ENCODE measurements at regions of chr7 and their contacts with region 1.

Region 1: GRCh38 chr7:90312745-90313144 is 8.4 kb downstream of the FAM237B start:
- DNase-seq: no peak
- H3K4me3 ChIP-seq: no peak overlapping the region
- H3K4me3 Mint-ChIP-seq: no peak overlapping the region
- H3K27ac Mint-ChIP-seq: no peak overlapping the region
- H3K4me1 ChIP-seq: no peaks in the 10 kb centered on the region
- H3K4me1 Mint-ChIP-seq: no peaks in the 10 kb centered on the region
- H3K27me3 ChIP-seq: no peaks in the 10 kb centered on the region
- H3K27me3 Mint-ChIP-seq: no peaks in the 10 kb centered on the region
- CTCF ChIP-seq: no peak

Region 2: GRCh38 chr7:90346336-90347125 is 33.8 kb after region 1 on chr7 and contains the start of gene GTPBP10:
- CTCF ChIA-PET with region 1: no interaction called
- POLR2A ChIA-PET with region 1: no interaction called
- intact Hi-C with region 1: no loop called
- DNase-seq: peak; percentile 93 to 94
- H3K4me3 ChIP-seq: peak within 1 kb of the TSS; percentile 86
- H3K4me3 Mint-ChIP-seq: peak within 1 kb of the TSS; percentile 86
- H3K27ac Mint-ChIP-seq: peak within 1 kb of the TSS; percentile 94
- H3K4me1 ChIP-seq: peaks cover 15% of the 10 kb centered on the region
- H3K4me1 Mint-ChIP-seq: peaks cover 32% of the 10 kb centered on the region
- H3K27me3 ChIP-seq: no peaks in the 10 kb centered on the region
- H3K27me3 Mint-ChIP-seq: no peaks in the 10 kb centered on the region
- CTCF ChIP-seq: peak; percentile 67 to 82
- total RNA-seq, gene GTPBP10: 42.7 and 45.2 TPM in 2 replicates

Region 3: GRCh38 chr7:90412458-90413184 is 99.9 kb after region 1 on chr7:
- CTCF ChIA-PET with region 1: no interaction called
- POLR2A ChIA-PET with region 1: no interaction called
- intact Hi-C with region 1: loop called (anchors 1 kb)
- DNase-seq: peak; percentile 60 to 64
- H3K4me3 ChIP-seq: no peak overlapping the region
- H3K4me3 Mint-ChIP-seq: no peak overlapping the region
- H3K27ac Mint-ChIP-seq: no peak overlapping the region
- H3K4me1 ChIP-seq: no peaks in the 10 kb centered on the region
- H3K4me1 Mint-ChIP-seq: no peaks in the 10 kb centered on the region
- H3K27me3 ChIP-seq: no peaks in the 10 kb centered on the region
- H3K27me3 Mint-ChIP-seq: no peaks in the 10 kb centered on the region
- CTCF ChIP-seq: peak; percentile 49 to 56

Region 4: GRCh38 chr7:90424720-90425119 is 112.0 kb after region 1 on chr7:
- CTCF ChIA-PET with region 1: interaction called, 24 read pairs
- POLR2A ChIA-PET with region 1: no interaction called
- intact Hi-C with region 1: loop called (anchors 1 kb)
- DNase-seq: no peak
- H3K4me3 ChIP-seq: no peak overlapping the region
- H3K4me3 Mint-ChIP-seq: no peak overlapping the region
- H3K27ac Mint-ChIP-seq: no peak overlapping the region
- H3K4me1 ChIP-seq: no peaks in the 10 kb centered on the region
- H3K4me1 Mint-ChIP-seq: no peaks in the 10 kb centered on the region
- H3K27me3 ChIP-seq: no peaks in the 10 kb centered on the region
- H3K27me3 Mint-ChIP-seq: no peaks in the 10 kb centered on the region
- CTCF ChIP-seq: no peak